Colonic mucosa (tissue), 4 donors: ENCODE measurements at regions of chr1 and their contacts with region 1.

Region 1: GRCh38 chr1:64136752-64137411 is 66.5 kb upstream of the UBE2U start:
- DNase-seq: peak; percentile 87
- H3K4me3 ChIP-seq: no peak overlapping the region
- H3K27ac ChIP-seq: no peak overlapping the region
- H3K4me1 ChIP-seq: no peaks in the 10 kb centered on the region
- H3K27me3 ChIP-seq: no peaks in the 10 kb centered on the region
- CTCF ChIP-seq: peak; percentile 88

Region 2: GRCh38 chr1:63615768-63616420 is 521.0 kb before region 1 on chr1:
- intact Hi-C with region 1: loop called (anchors 5 kb)
- DNase-seq: peak; percentile 79
- H3K4me3 ChIP-seq: no peak overlapping the region
- H3K27ac ChIP-seq: no peak overlapping the region
- H3K4me1 ChIP-seq: no peaks in the 10 kb centered on the region
- H3K27me3 ChIP-seq: no peaks in the 10 kb centered on the region
- CTCF ChIP-seq: peak; percentile 76

Region 3: DNA sequence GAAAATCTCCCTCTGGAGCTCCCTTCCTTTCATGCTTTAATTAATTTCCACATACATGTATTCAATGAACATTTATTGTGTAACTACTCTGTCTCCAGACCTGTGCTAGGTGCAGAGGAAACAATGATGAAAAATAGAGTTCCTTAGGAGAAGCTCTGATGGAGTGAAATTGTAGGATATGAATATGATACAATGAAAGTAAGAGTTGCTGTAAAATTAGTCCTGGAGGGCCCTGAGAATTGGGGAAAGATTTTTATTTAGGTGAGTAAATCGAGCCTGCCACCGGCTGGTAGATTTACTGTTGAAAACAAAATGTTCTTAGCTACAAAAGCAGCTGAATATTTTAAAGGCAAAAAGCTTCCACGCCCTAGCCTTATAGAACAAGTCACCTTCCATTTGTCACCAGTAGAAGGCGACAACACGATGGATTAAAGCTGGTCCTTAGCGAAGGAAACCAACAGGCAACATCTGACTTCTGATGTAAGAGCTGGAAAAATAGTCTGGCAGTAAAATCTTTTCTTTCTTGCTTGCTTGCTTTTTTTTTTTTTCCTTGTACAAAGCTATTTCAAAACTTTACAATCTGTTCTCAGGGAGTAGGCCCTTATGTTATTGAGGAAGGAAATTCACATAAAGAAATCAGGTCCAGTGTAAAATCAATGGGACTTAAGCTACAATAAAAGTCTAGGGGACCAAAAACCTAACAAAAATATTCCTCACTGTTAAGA is 445.0 kb before region 1 on chr1:
- intact Hi-C with region 1: loop called (anchors 5 kb)
- DNase-seq: peak; percentile 82
- H3K4me3 ChIP-seq: no peak overlapping the region
- H3K27ac ChIP-seq: peak overlapping the region; percentile 7
- H3K4me1 ChIP-seq: no peaks in the 10 kb centered on the region
- H3K27me3 ChIP-seq: no peaks in the 10 kb centered on the region
- CTCF ChIP-seq: peak; percentile 71

Region 4: DNA sequence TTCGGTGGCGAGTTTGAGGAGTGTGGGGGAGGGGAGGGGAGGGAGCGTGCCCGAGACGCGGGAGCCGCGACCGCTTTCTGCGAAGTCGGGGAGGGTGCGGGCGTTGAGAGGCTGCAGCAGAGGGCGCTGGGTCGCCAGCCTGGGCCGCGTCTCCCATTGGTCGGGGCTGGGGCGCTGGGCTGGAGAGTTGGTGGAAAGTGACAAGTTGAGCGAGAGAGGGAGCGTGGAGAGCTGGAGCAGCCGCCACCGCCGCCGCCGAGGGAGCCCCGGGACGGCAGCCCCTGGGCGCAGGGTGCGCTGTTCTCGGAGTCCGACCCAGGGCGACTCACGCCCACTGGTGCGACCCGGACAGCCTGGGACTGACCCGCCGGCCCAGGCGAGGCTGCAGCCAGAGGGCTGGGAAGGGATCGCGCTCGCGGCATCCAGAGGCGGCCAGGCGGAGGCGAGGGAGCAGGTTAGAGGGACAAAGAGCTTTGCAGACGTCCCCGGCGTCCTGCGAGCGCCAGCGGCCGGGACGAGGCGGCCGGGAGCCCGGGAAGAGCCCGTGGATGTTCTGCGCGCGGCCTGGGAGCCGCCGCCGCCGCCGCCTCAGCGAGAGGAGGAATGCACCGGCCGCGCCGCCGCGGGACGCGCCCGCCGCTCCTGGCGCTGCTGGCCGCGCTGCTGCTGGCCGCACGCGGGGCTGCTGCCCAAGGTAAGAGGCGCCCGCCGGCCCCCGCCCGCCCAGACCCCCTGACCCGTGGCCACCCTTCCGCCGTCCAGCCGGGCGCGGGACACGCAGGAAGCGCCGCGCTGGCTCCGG is 362.9 kb before region 1 on chr1 and contains the start of gene ROR1:
- intact Hi-C with region 1: loop called (anchors 5 kb)
- DNase-seq: peak; percentile 92
- H3K4me3 ChIP-seq: peak within 1 kb of the TSS; percentile 70
- H3K27ac ChIP-seq: peak within 1 kb of the TSS; percentile 67
- H3K4me1 ChIP-seq: no peaks in the 10 kb centered on the region
- H3K27me3 ChIP-seq: no peaks in the 10 kb centered on the region
- CTCF ChIP-seq: peak; percentile 44
- total RNA-seq, gene ROR1: 5.1 to 6.8 TPM

Region 5: DNA sequence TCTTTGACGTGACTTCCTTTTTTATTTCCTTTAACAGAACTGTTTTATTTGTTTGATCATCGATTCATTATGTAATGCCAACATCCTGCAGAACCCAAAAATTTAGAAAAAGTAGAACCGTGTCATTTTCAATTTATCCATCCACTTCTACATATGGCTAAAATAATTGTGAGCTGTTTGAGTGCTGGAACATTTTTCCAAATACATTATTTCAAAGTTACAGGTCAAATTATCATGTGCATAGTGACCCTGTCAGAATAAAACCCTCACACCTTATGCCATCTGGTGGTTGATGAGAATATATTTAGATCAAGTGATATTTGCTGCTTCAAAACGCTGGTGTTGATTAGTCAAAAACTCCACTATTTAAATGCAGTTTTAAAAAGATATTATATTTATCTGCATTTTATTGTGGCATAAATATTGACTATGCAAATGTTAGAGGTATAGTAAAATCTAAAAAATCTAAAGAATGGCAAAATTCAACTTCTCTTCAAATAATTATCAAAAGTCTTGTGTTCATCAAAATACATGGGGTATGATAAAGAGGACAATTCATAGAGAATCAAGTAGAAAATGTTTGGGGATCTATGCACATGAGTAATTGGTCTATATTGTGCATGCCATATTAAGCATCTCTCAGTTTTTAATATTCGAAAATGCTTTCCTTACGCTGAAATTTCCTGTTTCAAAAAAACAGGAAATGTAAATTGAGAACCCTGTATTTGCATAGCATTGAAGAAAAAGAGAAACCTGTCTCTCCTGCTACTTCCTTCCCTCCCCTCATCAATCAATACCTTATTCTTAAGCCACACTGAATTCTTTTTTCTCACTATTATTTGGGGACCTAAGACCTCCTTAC is 106.2 kb after region 1 on chr1:
- intact Hi-C with region 1: loop called (anchors 10 kb)
- DNase-seq: no peak
- H3K4me3 ChIP-seq: no peak overlapping the region
- H3K27ac ChIP-seq: no peak overlapping the region
- H3K4me1 ChIP-seq: no peaks in the 10 kb centered on the region
- H3K27me3 ChIP-seq: no peaks in the 10 kb centered on the region
- CTCF ChIP-seq: no peak

Region 6: GRCh38 chr1:64337475-64337874 is 200.6 kb after region 1 on chr1:
- intact Hi-C with region 1: no loop called
- DNase-seq: no peak
- H3K4me3 ChIP-seq: no peak overlapping the region
- H3K27ac ChIP-seq: no peak overlapping the region
- H3K4me1 ChIP-seq: no peaks in the 10 kb centered on the region
- H3K27me3 ChIP-seq: no peaks in the 10 kb centered on the region
- CTCF ChIP-seq: no peak